ENCODE measurements at regions of chr2 and their contacts with region 1.

Region 1: DNA sequence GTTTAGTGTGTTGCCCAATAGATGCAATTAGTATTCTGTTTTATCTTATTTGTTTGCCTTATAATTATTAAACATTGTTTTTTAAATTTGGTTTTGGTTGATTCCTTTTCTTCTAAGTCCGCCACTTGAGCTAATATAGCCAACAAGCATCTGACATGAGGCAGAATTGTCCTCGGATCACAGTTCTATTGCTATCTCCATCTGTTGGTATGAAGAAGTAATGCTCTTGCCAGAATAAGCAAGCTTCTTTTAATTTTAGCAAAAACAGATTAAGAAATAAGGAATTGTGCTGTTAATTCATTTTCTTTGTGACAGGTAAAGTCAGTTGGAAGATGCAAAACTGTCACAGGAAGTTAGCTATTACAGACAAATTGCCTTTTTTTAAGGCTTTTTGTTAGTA is 54.3 kb downstream of the R3HDM1 start:
- DNase-seq: peak; percentile 10 to 47 (median 36)
- H3K4me3 ChIP-seq: no peak overlapping the region
- H3K27ac ChIP-seq: no peak overlapping the region
- H3K4me1 ChIP-seq: peaks cover 0 to 9% (median 3%) of the 10 kb centered on the region in 4 experiments
- H3K27me3 ChIP-seq: no peaks in the 10 kb centered on the region

Region 2: DNA sequence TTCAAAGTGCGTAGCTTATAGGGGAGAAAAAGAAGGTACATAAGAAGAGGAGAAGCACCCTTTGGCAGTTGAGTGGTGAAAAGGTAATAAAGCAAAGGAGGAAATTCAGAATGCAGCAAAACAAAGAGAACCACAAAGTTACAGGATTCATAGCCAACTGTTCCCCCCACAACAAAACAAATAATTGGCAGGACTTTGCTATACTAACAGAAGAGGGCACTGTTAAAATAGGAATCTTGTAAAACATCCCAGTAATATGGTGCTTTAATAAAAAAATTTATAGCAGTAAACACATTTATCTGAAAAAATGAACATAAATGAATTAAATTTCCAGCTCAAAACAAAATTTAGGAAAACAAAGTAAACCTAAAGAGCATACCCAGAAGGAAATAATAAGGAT is 12.0 kb before region 1 on chr2:
- CTCF ChIA-PET with region 1: interaction called, 10 read pairs
- POLR2A ChIA-PET with region 1: interaction called, 3 read pairs
- DNase-seq: no peak
- H3K4me3 ChIP-seq: no peak overlapping the region
- H3K27ac ChIP-seq: no peak overlapping the region
- H3K4me1 ChIP-seq: no peaks in the 10 kb centered on the region
- H3K27me3 ChIP-seq: no peaks in the 10 kb centered on the region

Region 3: DNA sequence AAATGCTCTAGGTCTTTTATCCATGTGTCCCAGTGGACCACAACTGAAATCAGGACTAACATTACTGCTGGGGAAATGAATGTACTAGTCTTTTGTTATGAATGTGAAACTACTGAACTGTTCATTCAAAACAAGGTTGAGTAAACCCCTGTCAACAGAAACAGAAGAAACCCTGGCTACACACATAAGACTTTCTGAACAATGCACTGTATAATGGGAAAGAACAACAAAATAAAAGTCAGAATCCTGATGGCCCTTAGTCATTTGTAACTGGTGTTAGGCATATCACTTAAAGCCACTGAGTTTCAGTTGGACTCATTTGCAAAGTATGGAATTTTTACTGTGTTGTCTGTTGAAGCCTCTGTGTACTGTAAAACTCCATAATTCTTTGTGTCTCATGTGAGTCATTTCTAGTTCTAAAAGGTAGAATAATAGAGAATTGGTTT is 79.1 kb after region 1 on chr2:
- CTCF ChIA-PET with region 1: no interaction called
- POLR2A ChIA-PET with region 1: no interaction called
- DNase-seq: no peak
- H3K4me3 ChIP-seq: no peak overlapping the region
- H3K27ac ChIP-seq: no peak overlapping the region
- H3K4me1 ChIP-seq: peaks cover 4 to 27% (median 10%) of the 10 kb centered on the region in 4 experiments
- H3K27me3 ChIP-seq: no peaks in the 10 kb centered on the region